ENCODE measurements at regions of chr2 and their contacts with region 1.

Region 1: GRCh38 chr2:60998628-60999545 is 18.6 kb upstream of the PEX13 start:
- DNase-seq: no peak
- H3K4me3 ChIP-seq: no peak overlapping the region
- H3K27ac ChIP-seq: no peak overlapping the region
- H3K4me1 ChIP-seq: no peaks in the 10 kb centered on the region
- H3K27me3 ChIP-seq: no peaks in the 10 kb centered on the region
- CTCF ChIP-seq: peak; percentile 49 to 66 (median 52)
- EP300 ChIP-seq: no peak
- POLR2A ChIP-seq: no peak

Region 2: GRCh38 chr2:60707750-60708371 is 291.0 kb before region 1 on chr2:
- intact Hi-C with region 1: loop called (anchors 5 kb)
- DNase-seq: no peak
- H3K4me3 ChIP-seq: no peak overlapping the region
- H3K27ac ChIP-seq: no peak overlapping the region
- H3K4me1 ChIP-seq: no peaks in the 10 kb centered on the region
- H3K27me3 ChIP-seq: no peaks in the 10 kb centered on the region
- CTCF ChIP-seq: peak; percentile 66 to 76 (median 70)
- EP300 ChIP-seq: no peak
- POLR2A ChIP-seq: no peak

Region 3: DNA sequence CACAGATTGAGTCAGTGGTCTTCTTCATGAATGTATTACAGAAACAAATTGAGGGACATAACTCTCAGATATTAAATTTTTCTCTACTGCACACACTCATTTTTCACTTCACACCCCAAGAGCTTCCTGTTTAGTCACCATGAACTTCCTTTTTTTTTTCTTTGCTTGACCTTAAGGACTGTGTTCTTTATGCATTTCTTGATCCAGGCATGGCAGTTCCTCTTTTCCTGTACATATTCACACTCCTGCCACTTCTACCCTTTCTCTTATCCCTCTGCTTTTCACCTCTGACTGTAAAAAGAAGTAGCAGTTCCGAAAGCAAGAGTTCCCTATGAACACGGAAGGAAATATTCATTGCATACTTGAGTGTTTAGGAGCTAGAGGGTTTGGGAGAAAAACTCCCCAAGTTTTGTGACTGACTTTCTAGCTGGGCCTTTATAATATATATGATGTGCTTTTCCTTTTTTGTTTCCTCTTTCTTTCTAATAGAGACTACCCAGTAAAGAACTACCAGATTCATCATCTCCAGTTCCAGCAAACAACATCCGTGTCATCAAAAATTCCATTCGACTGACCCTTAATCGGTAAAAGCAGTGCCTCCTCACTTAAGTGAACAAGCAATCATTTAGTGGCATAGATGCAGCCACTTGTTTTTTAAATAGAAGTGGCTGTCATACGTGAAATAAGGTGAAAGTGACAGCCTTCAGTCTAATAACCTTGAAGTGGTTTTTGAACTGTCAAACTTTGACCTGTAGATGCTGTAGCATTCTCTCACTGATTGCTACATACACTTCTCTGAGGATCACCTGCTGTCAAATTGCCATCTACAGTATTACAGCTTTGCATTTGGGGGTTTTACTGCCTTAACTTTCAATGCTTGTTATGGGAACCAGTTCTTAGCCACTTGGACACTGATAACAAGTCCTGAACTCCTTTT is 202.0 kb before region 1 on chr2:
- intact Hi-C with region 1: loop called (anchors 2 kb)
- DNase-seq: peak; percentile 10
- H3K4me3 ChIP-seq: no peak overlapping the region
- H3K27ac ChIP-seq: no peak overlapping the region
- H3K4me1 ChIP-seq: no peaks in the 10 kb centered on the region
- H3K27me3 ChIP-seq: no peaks in the 10 kb centered on the region
- CTCF ChIP-seq: no peak
- EP300 ChIP-seq: no peak
- POLR2A ChIP-seq: no peak

Region 4: DNA sequence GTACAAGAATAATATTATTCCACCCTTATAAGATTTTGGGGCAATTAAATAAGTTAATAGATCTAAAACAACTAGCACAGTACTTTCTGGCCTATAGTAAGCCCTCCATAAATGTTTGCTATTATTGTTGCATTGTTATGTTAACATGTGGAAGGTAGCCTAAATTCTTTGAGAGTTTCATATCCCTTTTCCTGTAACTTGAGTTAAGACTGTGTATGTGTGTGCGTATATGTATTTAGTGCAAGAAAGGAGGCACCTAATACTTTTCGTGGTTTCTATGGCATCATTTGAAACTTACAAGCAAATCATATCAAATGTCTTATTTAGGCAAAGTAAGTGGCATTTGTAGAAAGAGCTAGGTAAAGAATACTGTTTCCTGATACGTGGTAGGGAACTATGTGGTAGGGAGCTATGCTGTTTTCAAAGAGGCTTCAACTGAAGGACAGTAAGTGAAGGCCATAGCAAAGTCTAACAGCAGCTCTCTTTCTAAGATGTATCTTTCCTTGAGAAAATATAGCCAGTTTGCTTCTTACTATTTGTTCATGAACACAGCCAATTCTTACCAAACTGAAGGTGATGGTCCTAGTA is 126.3 kb after region 1 on chr2:
- intact Hi-C with region 1: no loop called
- DNase-seq: no peak
- H3K4me3 ChIP-seq: no peak overlapping the region
- H3K27ac ChIP-seq: no peak overlapping the region
- H3K4me1 ChIP-seq: no peaks in the 10 kb centered on the region
- H3K27me3 ChIP-seq: no peaks in the 10 kb centered on the region
- CTCF ChIP-seq: no peak
- EP300 ChIP-seq: no peak
- POLR2A ChIP-seq: no peak

Region 5: DNA sequence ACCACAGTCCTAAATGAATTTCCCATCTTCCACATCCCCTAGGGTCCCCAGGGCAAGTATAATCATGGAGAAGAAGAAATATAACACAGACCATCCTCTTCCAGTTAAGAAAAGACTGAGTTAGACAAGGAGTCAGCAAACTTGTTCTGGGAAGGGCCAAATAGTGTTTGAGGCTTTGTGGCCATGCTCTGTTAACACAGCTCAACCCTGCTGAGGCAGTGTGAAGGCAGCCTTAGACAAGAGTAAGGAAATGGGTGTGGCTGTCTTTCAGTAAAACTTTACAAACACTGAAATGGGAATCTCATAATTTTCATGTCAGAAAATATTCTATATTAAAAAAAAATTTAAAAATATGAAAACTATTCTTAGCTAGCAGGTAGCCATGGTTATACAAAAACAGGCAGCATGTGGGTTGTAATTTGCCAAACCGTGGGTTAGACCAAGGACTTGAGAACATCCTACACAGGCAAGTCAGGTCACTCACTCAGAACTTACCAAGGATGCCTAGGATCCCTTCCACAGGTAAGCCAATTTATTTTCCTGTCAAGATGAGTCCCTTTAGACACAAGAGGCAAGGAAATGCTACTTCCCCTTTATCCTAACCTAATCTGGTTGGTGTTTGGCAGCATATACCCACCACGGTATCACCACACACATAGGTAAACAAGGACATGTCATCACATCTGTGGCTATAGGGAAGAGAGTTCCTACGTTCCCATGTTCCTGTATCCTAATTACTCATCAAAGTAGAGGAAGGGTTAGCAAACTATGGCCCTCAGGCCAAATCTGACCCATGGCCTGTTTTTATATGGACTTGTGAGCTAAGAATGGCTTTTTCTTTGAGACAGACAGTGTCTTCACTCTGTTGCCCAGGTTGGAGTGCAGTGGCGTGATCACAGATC is 195.0 kb after region 1 on chr2:
- intact Hi-C with region 1: no loop called
- DNase-seq: no peak
- H3K4me3 ChIP-seq: no peak overlapping the region
- H3K27ac ChIP-seq: no peak overlapping the region
- H3K4me1 ChIP-seq: peaks cover 5 to 11% (median 10%) of the 10 kb centered on the region in 4 donors
- H3K27me3 ChIP-seq: no peaks in the 10 kb centered on the region
- CTCF ChIP-seq: no peak
- EP300 ChIP-seq: no peak
- POLR2A ChIP-seq: no peak